Left ventricle myocardium superior (tissue), 1 donor: ENCODE measurements at regions of chr4 and their contacts with region 1.

Region 1: GRCh38 chr4:1249731-1250526 is 999 bp upstream of the CTBP1 start:
- DNase-seq: peak; percentile 59
- ATAC-seq: peak; percentile 6

Region 2: DNA sequence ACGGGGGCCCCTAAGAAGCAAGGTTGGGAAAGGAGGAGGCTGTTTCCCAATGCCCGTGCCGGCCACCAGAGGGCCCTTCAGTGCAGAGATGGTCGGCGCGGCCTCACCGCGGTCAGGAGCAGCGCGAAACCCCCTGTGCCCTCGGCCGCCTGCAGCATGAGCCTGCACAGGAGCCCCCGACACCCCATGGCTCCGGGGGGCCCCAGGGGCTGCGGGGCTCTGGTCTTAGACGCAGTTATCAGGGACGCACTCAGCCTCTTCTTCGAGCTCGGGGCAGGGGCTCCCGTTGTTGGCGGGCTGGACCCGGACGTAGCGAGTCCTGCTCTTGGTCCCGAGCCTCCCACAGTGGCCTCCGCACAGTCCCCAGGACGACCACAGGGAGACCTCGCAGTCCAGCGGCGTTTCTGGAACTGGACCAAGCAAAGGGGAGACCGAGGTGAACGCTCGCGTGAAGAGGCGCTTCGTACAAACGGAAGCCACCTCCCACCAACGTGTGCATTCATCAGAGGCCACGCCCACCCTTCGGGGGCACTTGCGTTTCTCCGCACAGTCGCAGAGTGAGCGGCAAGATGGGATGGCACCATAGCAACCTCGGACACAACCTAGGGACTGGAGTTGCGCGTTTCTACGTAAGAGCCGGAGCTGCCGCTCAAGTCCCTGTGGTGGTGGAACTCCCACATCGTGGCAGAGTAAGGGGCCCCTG is 82.5 kb before region 1 on chr4:
- intact Hi-C with region 1: loop called (anchors 10 kb)
- DNase-seq: peak; percentile 90
- ATAC-seq: peak; percentile 88